A673 (cell line): ENCODE measurements at regions of chr10 and their contacts with region 1.

Region 1: DNA sequence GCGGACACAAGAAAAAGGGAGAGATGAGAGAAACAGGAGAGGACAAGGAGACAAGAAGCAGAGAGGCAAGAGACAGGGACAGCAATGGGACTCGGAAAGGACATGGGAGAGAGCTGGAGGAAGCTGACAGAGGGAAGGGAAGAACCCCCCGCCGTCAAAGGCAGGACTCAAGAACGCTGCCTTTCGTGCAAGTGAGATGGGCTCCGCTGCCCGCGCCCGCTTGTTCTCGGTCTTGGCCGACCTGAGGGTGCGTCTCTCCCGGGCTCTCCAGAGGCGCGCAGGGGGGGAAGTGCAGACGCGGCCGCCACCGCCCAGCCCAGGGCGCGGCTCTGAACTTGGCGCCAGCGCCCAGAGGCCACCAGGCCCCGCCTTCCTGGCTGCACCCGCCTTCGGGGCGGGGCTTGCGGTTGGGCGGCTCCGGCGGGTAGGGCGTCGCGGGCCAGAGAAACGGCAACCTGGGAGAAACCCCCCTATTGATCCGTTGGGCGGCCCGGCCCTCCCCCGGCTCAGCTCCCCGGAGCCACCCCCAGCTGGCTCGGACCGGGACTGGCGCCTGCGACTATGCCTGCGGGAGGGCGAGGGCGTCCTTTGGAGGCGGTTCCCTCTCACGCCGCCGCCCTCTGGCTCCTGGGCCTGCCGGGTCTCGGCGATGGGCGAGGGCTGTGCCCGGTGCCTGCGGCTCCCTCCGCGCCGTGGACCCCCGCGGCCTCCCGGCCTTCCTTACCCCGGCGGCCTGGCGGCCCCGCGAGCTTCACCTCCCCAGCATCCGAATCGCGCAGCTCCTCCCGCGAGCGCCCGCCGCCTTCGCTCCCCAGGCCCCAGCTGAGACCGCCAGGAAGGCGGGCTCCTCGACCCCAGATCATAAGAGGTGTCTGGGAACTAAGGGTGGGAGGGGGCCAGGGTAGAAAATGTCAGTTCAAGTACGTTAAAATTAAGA is 2.2 kb upstream of the ANTXRL start:
- DNase-seq: peak; percentile 69
- H3K4me3 ChIP-seq: peak overlapping the region; percentile 58
- H3K27ac ChIP-seq: no peak overlapping the region
- H3K4me1 ChIP-seq: no peaks in the 10 kb centered on the region
- H3K27me3 ChIP-seq: peaks cover 42% of the 10 kb centered on the region
- CTCF ChIP-seq: no peak

Region 2: DNA sequence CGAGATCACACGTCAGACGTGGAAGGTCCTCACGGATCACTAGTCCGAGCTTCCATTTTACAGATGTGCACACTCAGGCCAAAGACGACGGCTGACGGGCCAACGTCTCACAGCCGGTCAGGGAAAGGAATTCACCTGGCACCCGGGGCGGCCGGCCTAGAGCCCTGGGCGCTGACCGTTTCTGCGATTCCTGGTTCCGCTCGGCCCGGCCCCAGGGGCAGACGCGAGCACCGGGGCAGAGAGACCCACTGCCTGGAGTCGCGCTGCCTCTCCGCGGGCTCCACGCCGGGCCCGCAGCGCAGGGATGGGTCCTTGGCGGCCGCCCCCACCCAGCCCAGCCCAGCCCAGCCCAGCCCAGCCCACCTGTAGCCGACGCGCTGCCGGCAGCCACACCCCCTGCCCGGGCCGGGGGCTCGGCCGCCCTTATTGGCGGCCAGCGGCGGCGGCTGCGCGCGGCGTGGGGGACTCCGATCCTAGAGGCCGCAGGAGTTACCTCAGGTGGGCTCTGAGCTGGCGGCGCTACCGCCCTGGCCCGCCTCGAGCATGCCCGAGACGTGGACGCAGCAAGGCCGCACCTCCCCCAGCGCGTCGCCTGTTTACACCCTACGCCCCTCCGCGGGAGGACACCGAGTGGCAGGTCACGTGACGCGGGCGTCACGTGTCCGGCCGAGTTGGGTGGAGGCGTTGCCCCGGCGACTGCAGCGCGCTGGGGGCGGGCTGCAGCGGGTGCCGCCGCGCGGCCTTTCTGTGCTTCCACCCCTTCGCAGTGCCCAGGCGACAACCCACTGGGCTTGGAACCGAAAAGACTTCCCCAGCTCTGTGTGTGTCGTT is 690.1 kb before region 1 on chr10:
- CTCF ChIA-PET with region 1: no interaction called
- POLR2A ChIA-PET with region 1: no interaction called
- intact Hi-C with region 1: no loop called
- DNase-seq: peak; percentile 96
- H3K4me3 ChIP-seq: peak overlapping the region; percentile 80
- H3K27ac ChIP-seq: peak overlapping the region; percentile 55
- H3K4me1 ChIP-seq: peaks cover 4% of the 10 kb centered on the region
- H3K27me3 ChIP-seq: peaks cover 3% of the 10 kb centered on the region
- CTCF ChIP-seq: no peak

Region 3: GRCh38 chr10:46106410-46107255 is 177.9 kb before region 1 on chr10:
- CTCF ChIA-PET with region 1: no interaction called
- POLR2A ChIA-PET with region 1: no interaction called
- intact Hi-C with region 1: loop called (anchors 5 kb)
- DNase-seq: peak; percentile 29
- H3K4me3 ChIP-seq: peak overlapping the region; percentile 42
- H3K27ac ChIP-seq: no peak overlapping the region
- H3K4me1 ChIP-seq: no peaks in the 10 kb centered on the region
- H3K27me3 ChIP-seq: peaks cover 24% of the 10 kb centered on the region
- CTCF ChIP-seq: no peak

Region 4: GRCh38 chr10:46546591-46547547 is 262.3 kb after region 1 on chr10:
- CTCF ChIA-PET with region 1: no interaction called
- POLR2A ChIA-PET with region 1: no interaction called
- intact Hi-C with region 1: no loop called
- DNase-seq: no peak
- H3K4me3 ChIP-seq: no peak overlapping the region
- H3K27ac ChIP-seq: no peak overlapping the region
- H3K4me1 ChIP-seq: no peaks in the 10 kb centered on the region
- H3K27me3 ChIP-seq: no peaks in the 10 kb centered on the region
- CTCF ChIP-seq: no peak